Aorta (tissue), 5 donors: ENCODE measurements at regions of chr6 and their contacts with region 1.

Region 1: DNA sequence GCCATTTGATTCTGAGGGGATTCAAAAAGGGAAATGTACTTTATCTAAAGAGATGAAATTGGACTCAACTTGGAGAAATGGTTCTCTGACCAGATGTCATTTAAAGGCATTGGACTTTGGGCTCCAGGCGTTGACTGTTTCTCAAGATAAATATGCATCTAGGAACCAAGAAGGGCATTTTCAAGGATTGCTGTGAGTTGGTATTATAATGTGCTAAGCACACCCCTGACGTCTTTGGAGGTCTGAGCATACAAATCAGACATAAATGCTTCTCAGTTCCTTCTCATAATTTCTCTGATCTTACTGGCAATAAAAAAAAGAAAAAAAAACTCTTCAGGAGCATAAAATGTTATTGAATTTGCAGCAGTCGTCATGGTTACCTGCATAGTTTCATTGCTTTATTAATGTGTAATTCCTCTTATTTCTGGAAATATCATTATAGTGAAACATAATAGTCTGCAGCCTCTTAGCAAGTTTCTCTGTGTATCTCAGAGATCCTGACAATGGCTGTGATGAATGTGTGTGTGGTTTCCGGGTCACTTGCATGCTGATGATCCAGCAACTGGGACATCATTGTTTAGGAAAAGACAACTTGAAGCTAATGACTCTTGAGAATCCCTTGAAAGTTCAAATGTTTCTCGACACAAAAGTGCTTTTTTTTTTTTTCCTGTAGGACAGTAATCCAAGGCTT is 136.0 kb downstream of the AIG1 start:
- DNase-seq: no peak
- ATAC-seq: no peak
- H3K4me3 ChIP-seq: no peak overlapping the region
- H3K27ac ChIP-seq: no peak overlapping the region
- H3K4me1 ChIP-seq: peaks cover 3 to 12% of the 10 kb centered on the region in 2 donors
- H3K27me3 ChIP-seq: no peaks in the 10 kb centered on the region

Region 2: GRCh38 chr6:143060354-143060805 is 136.3 kb before region 1 on chr6:
- intact Hi-C with region 1: loop called in 1 of 2 experiments (anchors 5 kb)
- DNase-seq: peak; percentile 92 to 95
- ATAC-seq: peak; percentile 94
- H3K4me3 ChIP-seq: peak overlapping the region; percentile 69 to 77
- H3K27ac ChIP-seq: peak overlapping the region; percentile 78 to 80
- H3K4me1 ChIP-seq: no peaks in the 10 kb centered on the region
- H3K27me3 ChIP-seq: no peaks in the 10 kb centered on the region